Endothelial cell of umbilical vein (primary cell): ENCODE measurements at regions of chr19 and their contacts with region 1.

Region 1: GRCh38 chr19:48970923-48971395 is 5.8 kb downstream of the FTL start:
- DNase-seq: peak; percentile 81
- H3K4me3 ChIP-seq: no peak overlapping the region
- H3K27ac ChIP-seq: no peak overlapping the region
- H3K4me1 ChIP-seq: no peaks in the 10 kb centered on the region
- H3K27me3 ChIP-seq: no peaks in the 10 kb centered on the region
- CTCF ChIP-seq: peak; percentile 94 to 95
- POLR2A ChIP-seq: no peak

Region 2: GRCh38 chr19:48637170-48637947 is 333.6 kb before region 1 on chr19 and contains the start of gene DBP:
- CTCF ChIA-PET with region 1: no interaction called
- POLR2A ChIA-PET with region 1: no interaction called
- dilution Hi-C with region 1: no loop called
- intact Hi-C with region 1: loop called (anchors 5 kb)
- DNase-seq: peak; percentile 98
- H3K4me3 ChIP-seq: peak within 1 kb of the TSS in 2 of 3 experiments; percentile 30 to 34
- H3K27ac ChIP-seq: no peak within 1 kb of the TSS
- H3K4me1 ChIP-seq: peaks cover 26% of the 10 kb centered on the region
- H3K27me3 ChIP-seq: peaks cover 3 to 13% of the 10 kb centered on the region in 2 experiments
- CTCF ChIP-seq: no peak
- POLR2A ChIP-seq: no peak
- total RNA-seq, gene DBP: 0.78 and 1.5 TPM in 2 replicates

Region 3: GRCh38 chr19:48795055-48795684 is 175.8 kb before region 1 on chr19:
- CTCF ChIA-PET with region 1: interaction called, 133 read pairs
- POLR2A ChIA-PET with region 1: no interaction called
- dilution Hi-C with region 1: no loop called
- intact Hi-C with region 1: loop called (anchors 1 kb)
- DNase-seq: peak; percentile 95
- H3K4me3 ChIP-seq: peak overlapping the region in 2 of 3 experiments; percentile 18 to 37
- H3K27ac ChIP-seq: peak overlapping the region; percentile 2
- H3K4me1 ChIP-seq: peaks cover 3% of the 10 kb centered on the region
- H3K27me3 ChIP-seq: no peaks in the 10 kb centered on the region
- CTCF ChIP-seq: peak; percentile 94 to 96
- POLR2A ChIP-seq: peak; percentile 48

Region 4: GRCh38 chr19:48842789-48843162 is 128.2 kb before region 1 on chr19:
- CTCF ChIA-PET with region 1: interaction called, 79 read pairs
- POLR2A ChIA-PET with region 1: no interaction called
- dilution Hi-C with region 1: no loop called
- intact Hi-C with region 1: no loop called
- DNase-seq: peak; percentile 62
- H3K4me3 ChIP-seq: no peak overlapping the region
- H3K27ac ChIP-seq: no peak overlapping the region
- H3K4me1 ChIP-seq: no peaks in the 10 kb centered on the region
- H3K27me3 ChIP-seq: no peaks in the 10 kb centered on the region
- CTCF ChIP-seq: peak; percentile 73 to 79
- POLR2A ChIP-seq: no peak

Region 5: DNA sequence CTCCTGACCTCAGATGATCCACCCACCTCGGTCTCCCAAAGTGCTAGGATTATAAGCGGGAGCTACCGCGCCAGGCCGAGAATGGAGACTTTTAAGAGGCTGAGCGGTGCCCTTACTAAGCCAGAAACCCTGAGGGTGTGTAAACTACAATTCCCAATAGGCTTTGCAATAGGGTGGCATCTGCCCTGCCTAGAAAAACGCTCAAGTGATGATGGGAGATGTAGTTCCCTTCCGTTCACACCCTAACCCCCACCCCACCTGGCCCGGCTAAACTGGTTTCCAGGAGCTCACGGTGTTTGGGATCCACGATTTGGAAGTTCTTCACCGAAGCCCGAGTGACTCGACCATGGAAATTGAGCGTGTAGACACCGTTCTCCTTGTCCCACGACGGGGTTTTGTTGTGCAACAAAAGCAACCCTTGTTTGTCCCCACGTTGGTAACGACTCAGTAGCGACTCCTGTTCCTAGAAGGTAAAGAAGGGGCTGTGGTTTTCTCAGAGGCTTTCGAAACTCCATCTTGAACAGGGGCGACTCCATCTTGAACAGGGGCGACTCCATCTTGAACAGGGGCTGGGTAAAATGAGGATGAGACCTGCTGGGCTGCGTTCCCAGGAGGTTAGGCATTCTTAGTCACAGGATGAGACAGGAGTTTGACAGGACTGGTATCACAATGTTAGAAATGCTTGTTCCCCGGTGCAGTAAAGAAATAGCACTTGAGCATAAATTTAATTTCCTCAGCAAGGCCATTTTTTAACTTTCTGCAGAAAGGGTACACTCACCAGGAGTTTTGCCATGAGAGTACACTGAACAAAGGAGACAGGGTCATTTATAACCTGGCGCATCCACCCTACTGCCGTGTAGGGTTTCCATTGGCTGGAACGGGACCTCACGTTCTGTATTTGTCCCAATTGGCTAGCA is 89.0 kb before region 1 on chr19:
- CTCF ChIA-PET with region 1: interaction called, 34 read pairs
- POLR2A ChIA-PET with region 1: interaction called, 3 read pairs
- dilution Hi-C with region 1: no loop called
- intact Hi-C with region 1: no loop called
- DNase-seq: no peak
- H3K4me3 ChIP-seq: no peak overlapping the region
- H3K27ac ChIP-seq: no peak overlapping the region
- H3K4me1 ChIP-seq: peaks cover 6% of the 10 kb centered on the region
- H3K27me3 ChIP-seq: no peaks in the 10 kb centered on the region
- CTCF ChIP-seq: no peak
- POLR2A ChIP-seq: no peak

Region 6: GRCh38 chr19:48954595-48955310 is 16.2 kb before region 1 on chr19 and contains the start of gene BAX:
- CTCF ChIA-PET with region 1: interaction called, 21 read pairs
- POLR2A ChIA-PET with region 1: interaction called, 3 read pairs
- dilution Hi-C with region 1: no loop called
- intact Hi-C with region 1: no loop called
- DNase-seq: peak; percentile 98
- H3K4me3 ChIP-seq: peak within 1 kb of the TSS; percentile 53 to 99 (median 66)
- H3K27ac ChIP-seq: peak within 1 kb of the TSS; percentile 84
- H3K4me1 ChIP-seq: peaks cover 18% of the 10 kb centered on the region
- H3K27me3 ChIP-seq: no peaks in the 10 kb centered on the region
- CTCF ChIP-seq: no peak
- POLR2A ChIP-seq: peak; percentile 97
- total RNA-seq, gene BAX: 267 and 295 TPM in 2 replicates

Region 7: DNA sequence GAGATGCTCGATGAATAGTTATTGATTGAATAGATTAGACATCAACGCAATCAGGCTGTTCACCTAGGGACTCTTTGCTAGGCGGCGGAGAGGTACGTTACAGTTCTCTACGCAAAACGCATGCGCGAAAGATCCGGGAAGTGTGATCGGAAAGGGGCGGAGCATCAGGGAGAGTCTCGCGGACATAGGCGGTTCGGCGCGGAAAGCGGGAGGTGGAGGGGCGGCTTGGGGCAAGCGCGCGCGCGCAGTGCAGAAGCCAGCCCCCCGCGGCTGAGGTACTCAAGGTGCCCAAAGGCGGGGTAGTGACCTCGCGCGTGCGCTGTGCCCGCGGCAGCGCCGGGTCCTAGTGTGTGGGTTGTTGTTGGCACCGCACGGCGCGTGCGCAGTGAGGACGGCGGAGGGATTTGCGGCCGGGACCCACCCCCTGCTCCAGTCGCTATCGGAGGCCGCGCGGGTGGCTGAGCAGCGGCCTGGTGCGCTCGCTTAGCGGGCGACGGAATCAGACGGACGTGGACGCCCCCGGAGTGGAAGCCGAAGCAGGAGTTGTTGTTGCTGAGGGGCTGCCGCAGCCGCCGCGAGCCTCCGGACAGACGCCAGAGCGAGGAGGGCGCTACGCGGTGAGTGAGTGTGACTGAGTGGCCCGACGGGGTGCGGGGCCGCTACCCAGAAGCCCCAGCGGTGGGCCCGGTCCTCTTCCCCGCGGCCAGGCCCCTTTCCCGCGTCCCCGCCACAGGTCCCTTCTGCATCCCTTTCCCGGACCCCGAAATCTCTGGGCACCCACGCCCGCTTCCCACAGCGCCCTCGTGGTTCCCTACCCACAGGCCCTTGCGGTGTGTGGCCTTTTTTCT is 114.3 kb after region 1 on chr19 and contains the start of gene SNRNP70:
- CTCF ChIA-PET with region 1: no interaction called
- POLR2A ChIA-PET with region 1: no interaction called
- dilution Hi-C with region 1: no loop called
- intact Hi-C with region 1: no loop called
- DNase-seq: peak; percentile 99
- H3K4me3 ChIP-seq: peak within 1 kb of the TSS; percentile 75 to 93 (median 89)
- H3K27ac ChIP-seq: peak within 1 kb of the TSS; percentile 73
- H3K4me1 ChIP-seq: peaks cover 14% of the 10 kb centered on the region
- H3K27me3 ChIP-seq: peaks cover 2 to 3% of the 10 kb centered on the region in 2 experiments
- CTCF ChIP-seq: no peak
- POLR2A ChIP-seq: peak; percentile 95
- total RNA-seq, gene SNRNP70: 215 and 228 TPM in 2 replicates

Region 8: GRCh38 chr19:49104229-49104864 is 133.4 kb after region 1 on chr19:
- CTCF ChIA-PET with region 1: no interaction called
- POLR2A ChIA-PET with region 1: no interaction called
- dilution Hi-C with region 1: no loop called
- intact Hi-C with region 1: no loop called
- DNase-seq: no peak
- H3K4me3 ChIP-seq: no peak overlapping the region
- H3K27ac ChIP-seq: no peak overlapping the region
- H3K4me1 ChIP-seq: no peaks in the 10 kb centered on the region
- H3K27me3 ChIP-seq: no peaks in the 10 kb centered on the region
- CTCF ChIP-seq: no peak
- POLR2A ChIP-seq: no peak